ENCODE measurements at regions of chr17 and their contacts with region 1.

Region 1: DNA sequence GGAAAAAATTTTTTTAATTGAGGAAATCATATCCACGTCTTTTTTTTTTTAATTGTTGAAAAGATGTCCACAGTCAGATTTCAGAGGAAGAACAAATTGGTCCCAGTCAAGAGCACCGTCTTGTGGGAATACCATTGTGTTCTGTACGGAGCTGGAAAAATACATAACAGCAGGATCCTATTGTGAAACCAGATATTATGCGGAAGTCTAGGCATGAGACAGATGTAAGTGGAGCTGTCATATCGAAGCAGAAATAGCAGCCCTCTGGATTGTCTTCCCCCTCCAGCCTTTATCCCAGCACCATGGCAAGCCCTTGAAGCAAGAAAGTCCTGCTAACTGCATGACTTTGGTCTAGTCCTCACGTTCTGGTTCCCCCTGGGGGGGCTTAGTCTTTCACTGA is 391.6 kb upstream of the ASIC2 start:
- DNase-seq: no peak
- ATAC-seq: no peak
- H3K4me3 ChIP-seq: no peak overlapping the region
- H3K4me3 Mint-ChIP-seq: no peak overlapping the region
- H3K27ac ChIP-seq: no peak overlapping the region
- H3K27ac Mint-ChIP-seq: no peak overlapping the region
- H3K4me1 ChIP-seq: no peaks in the 10 kb centered on the region
- H3K4me1 Mint-ChIP-seq: no peaks in the 10 kb centered on the region
- H3K27me3 ChIP-seq: no peaks in the 10 kb centered on the region
- H3K27me3 Mint-ChIP-seq: peaks cover 3% of the 10 kb centered on the region
- CTCF ChIP-seq: no peak

Region 2: DNA sequence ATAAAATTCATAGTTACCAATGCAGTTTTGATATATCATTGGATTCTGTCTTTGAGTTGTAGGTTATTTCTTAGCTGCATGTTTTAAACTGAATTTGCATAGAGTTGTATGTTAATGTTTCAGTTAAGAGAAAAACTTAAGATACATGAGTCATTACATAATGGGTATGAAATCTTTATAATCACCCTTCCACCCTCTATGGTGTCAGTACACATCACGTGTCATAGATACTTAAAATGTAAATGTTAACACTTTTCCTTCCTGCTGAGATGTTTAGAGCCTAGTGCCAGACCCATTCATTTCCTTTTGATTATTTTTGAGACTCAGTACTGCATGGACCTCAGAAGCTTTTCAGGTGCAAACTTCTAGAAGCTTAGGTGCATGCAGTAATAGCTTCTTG is 1314.3 kb before region 1 on chr17:
- CTCF ChIA-PET with region 1: no interaction called
- POLR2A ChIA-PET with region 1: no interaction called
- intact Hi-C with region 1: no loop called
- DNase-seq: no peak
- ATAC-seq: no peak
- H3K4me3 ChIP-seq: no peak overlapping the region
- H3K4me3 Mint-ChIP-seq: no peak overlapping the region
- H3K27ac ChIP-seq: no peak overlapping the region
- H3K27ac Mint-ChIP-seq: no peak overlapping the region
- H3K4me1 ChIP-seq: no peaks in the 10 kb centered on the region
- H3K4me1 Mint-ChIP-seq: peaks cover 6% of the 10 kb centered on the region
- H3K27me3 ChIP-seq: no peaks in the 10 kb centered on the region
- H3K27me3 Mint-ChIP-seq: no peaks in the 10 kb centered on the region
- CTCF ChIP-seq: no peak

Region 3: DNA sequence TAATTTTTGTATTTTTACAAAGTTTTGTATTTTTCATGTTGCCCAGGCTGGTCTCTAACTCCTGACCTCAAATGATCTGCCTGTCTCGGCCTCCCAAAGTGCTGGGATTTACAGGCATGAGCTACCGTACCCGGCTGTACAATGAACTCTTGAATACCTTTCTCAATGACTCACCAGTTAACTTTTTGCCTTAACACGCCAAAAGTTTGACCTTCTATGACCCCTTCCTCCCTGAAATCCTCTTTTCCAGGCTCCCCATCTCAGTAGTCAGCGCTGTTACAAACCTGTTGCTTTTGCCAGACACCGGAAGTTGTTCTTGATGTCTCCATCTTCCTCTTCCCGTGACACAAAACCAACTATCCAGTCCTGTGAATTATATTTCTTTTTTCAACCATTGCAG is 233.5 kb before region 1 on chr17:
- CTCF ChIA-PET with region 1: no interaction called
- POLR2A ChIA-PET with region 1: no interaction called
- intact Hi-C with region 1: no loop called
- DNase-seq: no peak
- ATAC-seq: no peak
- H3K4me3 ChIP-seq: no peak overlapping the region
- H3K4me3 Mint-ChIP-seq: no peak overlapping the region
- H3K27ac ChIP-seq: no peak overlapping the region
- H3K27ac Mint-ChIP-seq: no peak overlapping the region
- H3K4me1 ChIP-seq: no peaks in the 10 kb centered on the region
- H3K4me1 Mint-ChIP-seq: no peaks in the 10 kb centered on the region
- H3K27me3 ChIP-seq: peaks cover 0 to 3% (median 0%) of the 10 kb centered on the region in 4 experiments
- H3K27me3 Mint-ChIP-seq: peaks cover 6% of the 10 kb centered on the region
- CTCF ChIP-seq: no peak

Region 4: DNA sequence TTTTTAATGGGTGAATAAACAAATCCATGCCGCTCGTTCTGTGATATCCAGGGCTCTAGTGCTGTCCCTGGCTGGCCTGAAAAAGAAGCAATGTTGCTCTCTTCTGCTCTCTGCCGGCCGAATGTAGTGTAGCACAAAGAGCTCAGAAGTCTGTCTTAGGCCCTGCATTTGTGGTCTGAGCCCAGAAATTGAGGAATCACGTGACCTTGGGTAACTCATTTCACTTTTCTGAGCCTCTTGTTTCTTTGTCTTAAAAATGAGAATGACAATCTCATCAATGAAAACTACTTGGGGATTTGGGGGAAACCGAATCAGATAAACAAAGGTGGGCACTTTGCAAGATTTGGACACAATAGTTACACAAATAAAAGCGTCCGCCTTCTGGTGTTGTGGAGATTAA is 10.1 kb before region 1 on chr17:
- CTCF ChIA-PET with region 1: interaction called, 13 read pairs
- POLR2A ChIA-PET with region 1: no interaction called
- intact Hi-C with region 1: no loop called
- DNase-seq: peak; percentile 27
- ATAC-seq: no peak
- H3K4me3 ChIP-seq: no peak overlapping the region
- H3K4me3 Mint-ChIP-seq: no peak overlapping the region
- H3K27ac ChIP-seq: no peak overlapping the region
- H3K27ac Mint-ChIP-seq: no peak overlapping the region
- H3K4me1 ChIP-seq: no peaks in the 10 kb centered on the region
- H3K4me1 Mint-ChIP-seq: no peaks in the 10 kb centered on the region
- H3K27me3 ChIP-seq: no peaks in the 10 kb centered on the region
- H3K27me3 Mint-ChIP-seq: peaks cover 8% of the 10 kb centered on the region
- CTCF ChIP-seq: peak; percentile 63